K562 (cell line): ENCODE measurements at regions of chr6 and their contacts with region 1.

Region 1: DNA sequence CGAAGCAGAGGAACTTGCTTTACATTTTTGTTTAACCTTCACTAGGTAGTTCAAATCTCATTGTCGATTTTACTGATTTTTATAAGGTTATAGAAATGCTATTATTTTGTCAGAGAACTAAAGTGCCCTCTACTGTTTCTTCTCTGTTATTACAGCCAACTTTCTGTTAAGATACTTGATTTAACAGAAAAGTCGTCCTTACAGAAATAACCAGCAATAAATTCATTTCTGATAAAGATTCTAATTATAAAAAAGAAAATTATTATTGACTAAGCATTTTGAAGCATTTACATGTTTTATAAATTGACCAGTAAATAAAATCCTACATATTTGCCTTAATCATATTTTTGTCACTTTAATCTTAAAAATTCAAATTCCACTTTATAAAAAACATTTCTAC is 60.8 kb downstream of the OGFRL1 start:
- DNase-seq: peak in 2 of 4 experiments; percentile 8 to 20
- ATAC-seq: no peak
- H3K4me3 ChIP-seq: no peak overlapping the region
- H3K27ac ChIP-seq: no peak overlapping the region
- H3K4me1 ChIP-seq: no peaks in the 10 kb centered on the region
- H3K27me3 ChIP-seq: no peaks in the 10 kb centered on the region
- CTCF ChIP-seq: peak in 1 of 3 experiments; percentile 42; a peak in 2 of 6 replicates
- EP300 ChIP-seq: no peak
- POLR2A ChIP-seq: no peak
- RAD21 ChIP-seq: peak; percentile 32 to 54

Region 2: DNA sequence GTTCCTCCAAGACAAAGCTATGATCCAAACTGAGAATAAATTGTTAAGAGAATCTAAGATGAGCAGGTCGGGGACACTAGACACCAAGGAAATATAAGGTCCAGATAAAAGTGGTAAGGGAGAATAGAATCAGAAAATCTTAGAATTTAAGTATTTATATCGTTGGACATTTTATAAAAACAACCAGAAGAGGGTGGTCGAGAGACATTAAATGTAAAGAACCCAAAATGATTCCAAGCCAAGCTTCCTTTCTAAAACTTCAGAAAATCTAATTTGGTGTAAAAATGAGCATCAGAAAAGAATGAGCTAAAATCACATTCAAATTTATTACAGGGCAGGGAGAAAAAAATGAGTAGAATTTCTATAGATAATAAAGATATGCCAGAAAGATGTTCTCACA is 158.6 kb before region 1 on chr6:
- CTCF ChIA-PET with region 1: interaction called, 4 read pairs
- POLR2A ChIA-PET with region 1: no interaction called
- in situ Hi-C with region 1: no loop called
- intact Hi-C with region 1: loop called (anchors 2 kb)
- DNase-seq: no peak
- ATAC-seq: no peak
- H3K4me3 ChIP-seq: no peak overlapping the region
- H3K27ac ChIP-seq: no peak overlapping the region
- H3K4me1 ChIP-seq: no peaks in the 10 kb centered on the region
- H3K27me3 ChIP-seq: no peaks in the 10 kb centered on the region
- CTCF ChIP-seq: peak in 1 of 3 experiments; percentile 38; a peak in 3 of 6 replicates
- EP300 ChIP-seq: no peak
- POLR2A ChIP-seq: no peak
- RAD21 ChIP-seq: no peak; a peak in 1 of 4 replicates

Region 3: DNA sequence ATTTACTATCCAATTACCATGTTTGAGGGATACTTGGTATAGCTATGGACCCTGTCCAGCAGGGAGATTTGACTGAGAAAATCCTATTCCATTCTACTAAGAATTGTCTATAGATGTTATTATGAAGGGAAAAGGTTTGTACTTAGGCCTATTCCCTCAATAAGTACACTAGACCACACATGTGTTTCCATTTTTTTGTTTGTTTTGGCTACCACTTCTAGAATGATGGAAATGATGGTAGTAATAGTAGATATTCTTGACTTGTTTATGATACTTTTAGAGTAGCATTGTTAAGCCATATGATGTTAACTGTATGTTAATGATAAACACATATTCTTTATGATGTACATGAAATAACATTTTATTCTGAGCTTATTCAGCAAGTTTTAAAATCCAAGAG is 84.0 kb after region 1 on chr6:
- CTCF ChIA-PET with region 1: no interaction called
- POLR2A ChIA-PET with region 1: no interaction called
- in situ Hi-C with region 1: no loop called
- intact Hi-C with region 1: no loop called
- DNase-seq: no peak
- ATAC-seq: no peak
- H3K4me3 ChIP-seq: no peak overlapping the region
- H3K27ac ChIP-seq: no peak overlapping the region
- H3K4me1 ChIP-seq: no peaks in the 10 kb centered on the region
- H3K27me3 ChIP-seq: no peaks in the 10 kb centered on the region
- CTCF ChIP-seq: no peak
- EP300 ChIP-seq: no peak
- POLR2A ChIP-seq: no peak
- RAD21 ChIP-seq: no peak